Activated CD4-positive, alpha-beta memory T cell treated with anti-CD3 and anti-CD28 coated beads for 36 hours (primary cell): ENCODE measurements at regions of chr9 and their contacts with region 1.

Region 1: DNA sequence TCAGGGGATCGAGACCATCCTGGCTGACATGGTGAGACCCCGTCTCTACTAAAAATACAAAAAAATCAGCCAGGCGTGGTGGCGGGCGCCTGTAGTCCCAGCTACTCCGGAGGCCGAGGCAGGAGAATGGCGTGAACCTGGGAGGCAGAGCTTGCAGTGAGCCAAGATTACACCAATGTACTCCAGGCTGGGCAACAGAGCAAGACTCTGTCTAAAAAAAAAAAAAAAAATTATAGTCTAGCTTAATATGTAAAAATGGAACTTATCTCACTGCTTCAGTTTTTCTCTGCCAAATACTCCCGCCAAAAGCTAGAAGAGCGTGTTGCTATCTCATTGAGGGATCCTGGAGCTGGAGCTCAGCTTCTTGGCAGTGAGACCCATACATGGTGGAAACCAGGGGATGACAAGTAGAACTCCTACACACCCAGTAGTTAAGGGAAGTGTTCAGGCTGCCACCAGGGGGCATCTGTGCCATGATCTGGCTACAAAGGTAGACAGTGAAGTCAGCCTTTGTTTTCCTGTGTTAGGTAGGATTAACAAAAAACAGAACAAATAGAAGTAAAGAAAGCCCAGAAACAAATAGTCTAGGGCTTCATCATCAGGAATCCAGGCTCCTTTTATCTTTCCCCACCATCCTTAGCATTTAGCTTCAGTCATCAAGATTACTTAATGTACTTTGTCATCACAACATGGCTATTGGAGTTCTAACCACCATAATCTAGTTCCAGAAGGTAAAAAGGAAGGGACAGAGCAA is 33.6 kb upstream of the GLIPR2 start:
- DNase-seq: peak; percentile 92
- H3K4me3 Mint-ChIP-seq: no peak overlapping the region
- H3K27ac Mint-ChIP-seq: no peak overlapping the region
- H3K4me1 Mint-ChIP-seq: peaks cover 8% of the 10 kb centered on the region
- H3K27me3 Mint-ChIP-seq: no peaks in the 10 kb centered on the region

Region 2: DNA sequence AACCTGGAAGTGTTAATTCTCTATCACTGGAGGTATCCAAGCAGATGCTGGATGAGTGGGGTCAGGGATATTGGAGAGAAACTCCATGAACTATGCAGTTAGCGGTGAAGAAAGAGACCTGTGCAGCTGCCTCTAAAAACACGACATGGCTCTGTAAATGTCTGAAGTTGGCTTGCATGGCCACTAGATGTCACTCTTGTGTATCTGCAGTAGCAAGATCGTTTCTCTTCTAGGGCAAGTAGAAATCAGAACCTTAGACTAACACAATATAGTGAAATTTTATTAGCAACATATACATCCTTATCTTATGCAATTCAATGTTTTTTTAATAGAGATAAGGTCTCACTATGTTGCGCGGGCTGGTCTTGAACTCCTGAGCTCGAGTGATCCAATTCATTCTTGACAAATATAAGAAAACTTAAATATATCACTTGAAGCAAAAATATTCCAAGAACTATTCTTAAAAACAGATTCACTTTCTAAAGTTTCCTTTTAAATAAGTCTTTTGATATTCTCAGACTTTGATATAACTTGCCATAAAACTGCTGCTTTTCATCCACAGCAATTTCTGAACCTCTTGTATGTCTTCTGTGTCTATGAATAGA is 147.9 kb before region 1 on chr9:
- CTCF ChIA-PET with region 1: interaction called, 3 read pairs
- POLR2A ChIA-PET with region 1: no interaction called
- intact Hi-C with region 1: loop called (anchors 5 kb)
- DNase-seq: peak; percentile 59
- H3K4me3 Mint-ChIP-seq: no peak overlapping the region
- H3K27ac Mint-ChIP-seq: no peak overlapping the region
- H3K4me1 Mint-ChIP-seq: peaks cover 6% of the 10 kb centered on the region
- H3K27me3 Mint-ChIP-seq: peaks cover 2% of the 10 kb centered on the region

Region 3: GRCh38 chr9:36116593-36116992 is 13.7 kb after region 1 on chr9:
- CTCF ChIA-PET with region 1: interaction called, 21 read pairs
- POLR2A ChIA-PET with region 1: interaction called, 3 read pairs
- intact Hi-C with region 1: no loop called
- DNase-seq: no peak
- H3K4me3 Mint-ChIP-seq: no peak overlapping the region
- H3K27ac Mint-ChIP-seq: no peak overlapping the region
- H3K4me1 Mint-ChIP-seq: peaks cover 2% of the 10 kb centered on the region
- H3K27me3 Mint-ChIP-seq: no peaks in the 10 kb centered on the region

Region 4: DNA sequence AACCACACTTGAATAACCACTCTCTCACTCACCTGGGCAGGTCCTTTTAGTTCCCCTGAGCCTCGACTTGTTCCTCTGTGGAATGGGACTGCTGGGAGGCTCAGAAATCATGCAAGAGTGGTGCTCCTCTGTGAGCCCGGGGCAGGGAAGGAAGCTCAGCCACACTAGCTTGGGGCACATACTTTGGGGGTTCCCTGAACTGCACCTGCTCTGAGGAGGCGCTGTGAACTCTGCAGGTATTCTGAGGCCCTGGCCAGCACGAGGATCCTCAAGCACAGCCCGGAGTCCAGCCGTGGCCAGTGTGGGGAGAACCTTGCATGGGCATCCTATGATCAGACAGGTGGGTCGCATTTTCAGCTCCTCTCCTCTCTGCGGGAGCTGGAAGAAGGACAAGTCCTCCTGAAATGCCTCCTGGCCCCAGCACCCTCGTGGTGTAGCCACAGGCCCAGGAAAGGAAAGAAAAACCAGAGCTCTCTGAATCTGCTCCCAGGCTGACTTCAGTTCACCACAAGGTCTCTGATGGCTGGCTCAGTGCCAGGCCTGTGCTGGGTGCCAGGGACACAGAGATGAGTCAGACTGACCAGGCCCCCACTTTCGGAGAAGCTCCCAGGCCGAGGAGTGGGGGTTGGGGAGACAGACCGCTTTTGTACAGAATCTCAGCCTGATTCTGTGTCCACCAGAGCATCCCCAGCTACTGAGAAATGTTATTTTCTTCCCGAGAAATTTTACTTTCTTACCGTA is 45.6 kb after region 1 on chr9:
- CTCF ChIA-PET with region 1: interaction called, 8 read pairs
- POLR2A ChIA-PET with region 1: no interaction called
- intact Hi-C with region 1: loop called (anchors 1 kb)
- DNase-seq: peak; percentile 88
- H3K4me3 Mint-ChIP-seq: no peak overlapping the region
- H3K27ac Mint-ChIP-seq: peak overlapping the region; percentile 30
- H3K4me1 Mint-ChIP-seq: peaks cover 84% of the 10 kb centered on the region
- H3K27me3 Mint-ChIP-seq: no peaks in the 10 kb centered on the region

Region 5: DNA sequence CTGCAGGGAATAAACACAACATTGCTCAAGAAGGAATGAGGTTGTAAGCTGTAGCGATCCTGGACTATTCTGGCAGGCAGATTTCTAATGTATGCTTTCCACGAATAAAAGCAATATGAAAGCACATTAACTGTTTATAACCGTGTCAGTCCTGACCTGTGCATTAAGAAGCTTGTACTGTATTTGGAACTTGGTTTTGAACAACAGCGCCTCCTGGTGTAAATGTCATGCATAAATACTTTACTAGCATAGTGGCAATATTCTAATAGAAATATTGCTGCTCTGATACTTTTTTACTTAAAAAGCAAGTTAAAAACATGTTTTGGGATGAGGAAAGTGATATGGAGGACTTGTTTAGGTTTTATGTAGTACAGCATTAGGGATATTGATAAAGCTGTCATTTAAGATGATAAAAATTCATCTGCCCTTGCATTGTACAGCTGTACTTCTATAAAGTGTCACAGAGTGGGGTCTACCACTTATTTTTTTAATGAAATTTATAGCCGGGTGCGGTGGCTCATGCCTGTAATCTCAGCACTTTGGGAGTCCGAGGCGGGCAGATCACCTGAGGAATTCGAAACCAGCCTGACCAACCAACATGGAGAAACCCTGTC is 226.0 kb after region 1 on chr9:
- CTCF ChIA-PET with region 1: interaction called, 10 read pairs
- POLR2A ChIA-PET with region 1: no interaction called
- intact Hi-C with region 1: loop called (anchors 1 kb)
- DNase-seq: peak; percentile 17
- H3K4me3 Mint-ChIP-seq: no peak overlapping the region
- H3K27ac Mint-ChIP-seq: no peak overlapping the region
- H3K4me1 Mint-ChIP-seq: peaks cover 5% of the 10 kb centered on the region
- H3K27me3 Mint-ChIP-seq: no peaks in the 10 kb centered on the region